ENCODE measurements at regions of chr4 and their contacts with region 1.

Region 1: GRCh38 chr4:182938205-182938645 is 21.0 kb upstream of the DCTD start:
- DNase-seq: peak; percentile 74
- H3K4me3 ChIP-seq: no peak overlapping the region
- H3K27ac ChIP-seq: no peak overlapping the region
- H3K4me1 ChIP-seq: peaks cover 7% of the 10 kb centered on the region
- H3K27me3 ChIP-seq: peaks cover 4% of the 10 kb centered on the region; the same call in 1 of the 2 replicates

Region 2: GRCh38 chr4:183256756-183257385 is 318.6 kb after region 1 on chr4:
- in situ Hi-C with region 1: loop called (anchors 10 kb)
- DNase-seq: peak; percentile 75
- H3K4me3 ChIP-seq: no peak overlapping the region
- H3K27ac ChIP-seq: peak overlapping the region; percentile 20; the same call in 1 of the 2 replicates
- H3K4me1 ChIP-seq: peaks cover 7% of the 10 kb centered on the region; the same call in 1 of the 2 replicates
- H3K27me3 ChIP-seq: no peaks in the 10 kb centered on the region

Region 3: GRCh38 chr4:183398227-183399125 is 460.3 kb after region 1 on chr4:
- in situ Hi-C with region 1: loop called (anchors 25 kb)
- DNase-seq: peak; percentile 92
- H3K4me3 ChIP-seq: peak overlapping the region; percentile 77
- H3K27ac ChIP-seq: peak overlapping the region; percentile 25
- H3K4me1 ChIP-seq: peaks cover 14% of the 10 kb centered on the region
- H3K27me3 ChIP-seq: no peaks in the 10 kb centered on the region

Region 4: GRCh38 chr4:183830438-183830985 is 892.3 kb after region 1 on chr4:
- in situ Hi-C with region 1: no loop called
- DNase-seq: no peak
- H3K4me3 ChIP-seq: no peak overlapping the region
- H3K27ac ChIP-seq: no peak overlapping the region
- H3K4me1 ChIP-seq: no peaks in the 10 kb centered on the region
- H3K27me3 ChIP-seq: no peaks in the 10 kb centered on the region

Measured in GM23248 (cell line).